T-cell (primary cell): ENCODE measurements at regions of chr3 and their contacts with region 1.

Region 1: GRCh38 chr3:16048435-16049318 is 125.8 kb upstream of the GALNT15 start:
- DNase-seq: peak in 25 of 35 experiments; percentile 2 to 67 (median 22)
- ATAC-seq: peak; percentile 74 to 88 (median 82)
- H3K4me3 ChIP-seq: no peak overlapping the region
- H3K4me3 Mint-ChIP-seq: peak overlapping the region in 2 of 3 donors; percentile 31 to 54
- H3K27ac ChIP-seq: no peak overlapping the region
- H3K27ac Mint-ChIP-seq: no peak overlapping the region
- H3K4me1 ChIP-seq: no peaks in the 10 kb centered on the region
- H3K4me1 Mint-ChIP-seq: peaks cover 5 to 6% (median 6%) of the 10 kb centered on the region in 3 donors
- H3K27me3 ChIP-seq: peaks cover 0 to 3% of the 10 kb centered on the region in 2 experiments
- H3K27me3 Mint-ChIP-seq: no peaks in the 10 kb centered on the region

Region 2: GRCh38 chr3:16280671-16281070 is 232.0 kb after region 1 on chr3:
- CTCF ChIA-PET with region 1: interaction called in 1 of 2 experiments, 3 read pairs
- POLR2A ChIA-PET with region 1: interaction called in 1 of 2 experiments, 10 read pairs
- DNase-seq: no peak
- ATAC-seq: no peak
- H3K4me3 ChIP-seq: no peak overlapping the region
- H3K4me3 Mint-ChIP-seq: no peak overlapping the region
- H3K27ac ChIP-seq: no peak overlapping the region
- H3K27ac Mint-ChIP-seq: no peak overlapping the region
- H3K4me1 ChIP-seq: peaks cover 8 to 12% of the 10 kb centered on the region in 2 experiments
- H3K4me1 Mint-ChIP-seq: peaks cover 21 to 26% (median 23%) of the 10 kb centered on the region in 3 donors
- H3K27me3 ChIP-seq: no peaks in the 10 kb centered on the region
- H3K27me3 Mint-ChIP-seq: no peaks in the 10 kb centered on the region

Region 3: DNA sequence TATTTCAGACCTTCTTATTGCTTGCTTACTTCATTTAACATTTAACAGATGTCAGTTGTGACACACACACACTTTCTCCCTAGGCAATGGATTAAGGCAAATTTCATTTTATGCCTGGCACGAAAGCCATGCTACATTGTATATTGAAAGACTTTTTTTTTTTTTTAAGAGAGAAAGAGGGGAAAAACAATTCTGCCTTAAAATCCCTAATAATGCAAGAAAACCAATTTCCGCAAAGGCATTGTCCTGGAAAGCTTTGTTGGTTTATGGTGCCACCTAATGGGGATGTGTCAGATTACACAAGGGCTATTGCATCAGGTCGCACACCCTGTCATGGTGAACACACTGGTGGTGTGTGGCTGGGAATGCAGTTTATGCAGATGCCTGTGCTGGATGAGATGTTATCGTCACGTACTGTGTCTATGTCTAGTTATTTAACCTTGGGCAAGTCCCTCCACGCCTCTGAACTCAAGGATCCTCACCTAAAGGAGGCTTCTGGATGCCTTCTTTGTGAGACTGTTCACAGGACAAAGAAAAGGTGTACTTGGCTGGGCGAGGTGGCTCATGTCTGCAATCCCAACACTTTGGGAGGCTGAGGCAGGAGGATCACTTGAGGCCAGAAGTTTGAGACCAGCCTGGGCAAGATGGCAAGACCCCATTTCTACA is 502.1 kb after region 1 on chr3:
- CTCF ChIA-PET with region 1: interaction called in 1 of 2 experiments, 12 read pairs
- POLR2A ChIA-PET with region 1: no interaction called
- DNase-seq: peak; percentile 32 to 90 (median 66)
- ATAC-seq: peak; percentile 93 to 99 (median 98)
- H3K4me3 ChIP-seq: no peak overlapping the region
- H3K4me3 Mint-ChIP-seq: no peak overlapping the region
- H3K27ac ChIP-seq: no peak overlapping the region
- H3K27ac Mint-ChIP-seq: peak overlapping the region; percentile 61 to 66
- H3K4me1 ChIP-seq: peaks cover 2% of the 10 kb centered on the region in 2 experiments
- H3K4me1 Mint-ChIP-seq: peaks cover 6 to 9% (median 6%) of the 10 kb centered on the region in 3 donors
- H3K27me3 ChIP-seq: peaks cover 0 to 4% of the 10 kb centered on the region in 2 experiments
- H3K27me3 Mint-ChIP-seq: peaks cover 3 to 9% of the 10 kb centered on the region in 2 donors